AG04449 (cell line): ENCODE measurements at regions of chr5 and their contacts with region 1.

Region 1: GRCh38 chr5:35003018-35003957 is 44.5 kb downstream of the AGXT2 start:
- DNase-seq: no peak
- H3K4me3 ChIP-seq: no peak overlapping the region
- CTCF ChIP-seq: peak; percentile 79

Region 2: GRCh38 chr5:34474573-34475021 is 528.7 kb before region 1 on chr5:
- CTCF ChIA-PET with region 1: interaction called, 31 read pairs
- POLR2A ChIA-PET with region 1: no interaction called
- DNase-seq: no peak
- H3K4me3 ChIP-seq: no peak overlapping the region
- CTCF ChIP-seq: peak; percentile 78

Region 3: GRCh38 chr5:34826347-34826746 is 176.9 kb before region 1 on chr5:
- CTCF ChIA-PET with region 1: no interaction called
- POLR2A ChIA-PET with region 1: no interaction called
- DNase-seq: no peak
- H3K4me3 ChIP-seq: no peak overlapping the region
- CTCF ChIP-seq: no peak

Region 4: DNA sequence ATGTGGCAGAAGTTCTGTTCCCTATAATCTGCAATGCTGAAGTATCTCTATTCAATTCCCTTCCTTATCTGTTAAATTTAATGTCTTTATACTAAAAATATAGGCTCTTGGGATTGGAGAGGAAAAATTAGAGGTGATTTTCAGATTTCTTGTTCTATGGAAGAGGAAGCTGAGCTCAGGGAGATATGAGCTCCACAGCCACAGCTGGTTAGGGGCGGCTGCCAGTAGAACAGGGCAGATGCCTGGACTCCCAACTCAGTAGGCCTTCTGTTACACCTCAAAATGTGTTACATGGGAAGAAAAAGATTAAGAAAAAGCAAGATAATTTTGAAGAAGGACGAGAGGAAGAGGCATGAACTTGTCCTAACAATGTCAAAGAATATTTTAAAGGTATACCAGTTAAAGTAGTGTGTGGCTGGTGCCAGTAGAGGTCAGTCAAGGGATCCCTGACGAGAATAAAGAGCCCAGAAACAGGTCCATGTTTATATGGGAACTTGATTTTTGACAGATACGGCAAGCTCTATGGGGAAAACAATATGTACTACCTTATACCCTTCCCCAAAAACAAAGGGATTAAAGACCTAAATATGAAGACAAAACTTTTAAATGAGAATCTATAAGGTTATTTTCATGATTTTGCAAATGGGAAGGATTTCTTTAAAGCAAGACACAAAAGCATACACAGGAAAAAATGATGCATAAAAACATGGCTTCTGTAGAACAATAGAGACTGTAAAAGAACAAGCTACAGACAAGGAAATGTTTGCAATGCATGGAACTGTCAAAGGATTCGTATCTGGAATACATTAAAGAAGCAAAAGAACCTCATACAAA is 45.2 kb before region 1 on chr5:
- CTCF ChIA-PET with region 1: interaction called, 72 read pairs
- POLR2A ChIA-PET with region 1: no interaction called
- DNase-seq: no peak
- H3K4me3 ChIP-seq: no peak overlapping the region
- CTCF ChIP-seq: peak; percentile 54

Region 5: DNA sequence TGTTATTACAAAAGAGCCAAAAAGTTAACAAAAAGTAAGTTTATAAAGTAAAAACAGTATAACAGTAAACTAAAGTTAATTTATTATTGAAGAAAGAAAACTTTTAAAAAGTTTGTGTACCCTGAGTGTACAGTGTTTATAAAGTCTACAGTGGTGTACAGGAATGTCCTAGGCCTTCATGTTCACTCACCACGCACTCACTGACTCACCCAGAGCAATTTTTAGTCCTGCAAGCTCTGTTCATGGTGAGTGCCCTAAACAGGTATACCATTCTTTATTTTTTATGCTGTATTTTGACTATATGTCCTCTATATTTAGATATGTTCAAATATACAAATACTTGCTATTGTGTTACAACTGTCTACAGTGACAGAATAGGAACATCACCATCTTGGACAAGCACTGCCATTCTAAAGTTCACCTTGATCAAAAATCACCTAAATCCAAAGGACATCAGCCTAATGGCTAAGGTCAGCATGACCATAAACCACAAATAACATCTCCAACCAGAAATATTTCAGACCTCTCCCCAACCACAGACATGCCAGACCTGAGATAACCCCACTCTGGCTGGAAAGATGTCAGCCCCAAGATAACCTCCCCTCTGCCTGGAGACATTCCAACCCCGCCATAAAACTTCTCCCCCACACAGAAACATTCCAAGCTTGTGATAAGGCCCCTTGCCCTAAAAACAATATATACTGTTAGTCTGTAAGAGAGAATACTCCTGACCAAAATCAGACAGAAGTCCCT is 11.6 kb before region 1 on chr5:
- CTCF ChIA-PET with region 1: interaction called, 38 read pairs
- POLR2A ChIA-PET with region 1: no interaction called
- DNase-seq: no peak
- H3K4me3 ChIP-seq: no peak overlapping the region
- CTCF ChIP-seq: no peak

Region 6: GRCh38 chr5:35029333-35029732 is 26.0 kb after region 1 on chr5:
- CTCF ChIA-PET with region 1: interaction called, 10 read pairs
- POLR2A ChIA-PET with region 1: no interaction called
- DNase-seq: no peak
- H3K4me3 ChIP-seq: no peak overlapping the region
- CTCF ChIP-seq: no peak